Activated T-helper 2 cell treated with anti-CD3 and anti-CD28 coated beads, Interferon-gamma antibody, Interleukin-2, Interleukin-4, amounts not matched to agents 10 μg/mL and 5 μg/mL and 100 μg/mL, durations not matched to agents 14 hours and 24 hours and 36 hours (primary cell): ENCODE measurements at regions of chr6 and their contacts with region 1.

Region 1: DNA sequence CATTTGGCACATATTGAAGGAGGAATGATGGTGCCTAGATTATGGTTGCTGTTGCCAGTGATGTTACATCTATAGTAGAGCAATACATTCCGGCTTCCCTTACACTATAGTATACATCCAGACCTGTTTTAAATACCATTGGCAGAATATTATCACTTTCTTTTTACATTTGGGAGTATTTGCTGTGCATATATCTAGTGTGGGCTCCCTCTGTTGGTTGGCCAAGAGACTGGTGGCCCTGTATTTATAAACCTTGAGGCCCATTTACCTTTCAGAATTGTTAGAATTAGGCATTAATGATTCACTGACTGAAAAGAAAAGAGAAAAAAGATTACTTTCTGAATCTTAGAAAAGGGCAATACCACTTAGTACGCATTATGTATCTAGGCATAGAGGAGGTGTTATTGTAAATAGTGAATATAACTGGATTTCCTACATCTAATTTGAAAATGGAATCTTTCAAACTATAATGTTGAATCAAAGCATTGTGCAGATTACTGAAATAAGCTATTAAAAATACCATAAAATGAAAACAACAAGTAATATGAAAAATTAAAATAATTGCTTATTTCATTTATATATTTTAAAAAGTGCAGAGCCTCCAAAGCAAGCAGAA is 628.8 kb upstream of the MAN1A1 start:
- DNase-seq: no peak
- H3K4me3 Mint-ChIP-seq: no peak overlapping the region
- H3K27ac Mint-ChIP-seq: no peak overlapping the region
- H3K4me1 Mint-ChIP-seq: no peaks in the 10 kb centered on the region
- H3K27me3 Mint-ChIP-seq: no peaks in the 10 kb centered on the region

Region 2: GRCh38 chr6:119742188-119742803 is 236.1 kb before region 1 on chr6:
- intact Hi-C with region 1: loop called (anchors 5 kb)
- DNase-seq: peak; percentile 36
- H3K4me3 Mint-ChIP-seq: no peak overlapping the region
- H3K27ac Mint-ChIP-seq: no peak overlapping the region
- H3K4me1 Mint-ChIP-seq: no peaks in the 10 kb centered on the region
- H3K27me3 Mint-ChIP-seq: peaks cover 15% of the 10 kb centered on the region